ENCODE measurements at regions of chr7 and their contacts with region 1.

Region 1: DNA sequence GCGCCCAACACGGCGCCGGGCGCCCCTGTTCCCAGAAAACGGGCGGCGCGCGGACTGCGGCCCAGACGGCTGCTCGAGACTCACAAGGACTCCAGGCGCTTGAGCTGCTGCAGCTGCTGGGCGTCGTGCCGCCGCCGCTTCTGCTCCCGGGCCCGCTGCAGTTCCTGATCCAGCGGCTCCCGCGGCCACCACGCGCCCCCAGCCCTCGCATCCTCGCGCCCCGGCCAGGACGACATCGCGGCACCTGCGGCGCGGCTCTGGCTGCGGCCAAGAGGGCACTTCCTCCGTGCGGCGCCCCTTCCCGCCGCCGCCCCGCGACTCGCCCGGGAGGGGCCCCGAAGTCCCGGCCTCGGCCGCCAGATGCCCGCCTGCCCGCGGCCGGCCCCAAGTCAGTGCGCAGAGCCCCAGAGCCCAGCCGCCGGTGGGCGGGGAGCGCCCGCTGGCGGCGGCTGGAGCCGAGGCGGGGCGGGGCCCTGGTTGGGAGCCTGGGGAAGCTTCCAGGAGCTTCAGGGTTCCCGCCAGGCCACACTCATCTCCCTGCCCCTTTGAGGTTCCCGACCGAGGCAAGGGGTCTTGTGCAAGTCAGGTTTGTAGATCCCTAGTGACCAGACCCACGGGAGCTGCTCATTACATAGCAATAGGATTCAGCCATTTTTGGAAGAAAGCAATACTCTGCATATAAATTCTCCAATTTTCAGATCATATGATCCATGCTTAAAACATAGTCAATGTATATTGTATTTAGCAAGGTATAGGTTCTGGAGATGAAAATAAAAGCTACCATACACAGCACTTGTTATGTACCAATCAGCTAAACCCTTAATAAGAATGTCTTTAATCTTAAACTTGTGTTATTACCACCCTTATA is 14.2 kb upstream of the FKBP9 start:
- DNase-seq: peak; percentile 50
- ATAC-seq: peak; percentile 89
- H3K4me3 ChIP-seq: peak overlapping the region; percentile 79 to 86
- H3K27ac ChIP-seq: peak overlapping the region; percentile 96
- H3K4me1 ChIP-seq: peaks cover 8 to 18% of the 10 kb centered on the region in 2 experiments
- H3K27me3 ChIP-seq: no peaks in the 10 kb centered on the region
- CTCF ChIP-seq: peak; percentile 33 to 40 (median 40); a peak in 5 of 6 replicates
- POLR2A ChIP-seq: peak; percentile 17
- RAD21 ChIP-seq: peak; percentile 58

Region 2: DNA sequence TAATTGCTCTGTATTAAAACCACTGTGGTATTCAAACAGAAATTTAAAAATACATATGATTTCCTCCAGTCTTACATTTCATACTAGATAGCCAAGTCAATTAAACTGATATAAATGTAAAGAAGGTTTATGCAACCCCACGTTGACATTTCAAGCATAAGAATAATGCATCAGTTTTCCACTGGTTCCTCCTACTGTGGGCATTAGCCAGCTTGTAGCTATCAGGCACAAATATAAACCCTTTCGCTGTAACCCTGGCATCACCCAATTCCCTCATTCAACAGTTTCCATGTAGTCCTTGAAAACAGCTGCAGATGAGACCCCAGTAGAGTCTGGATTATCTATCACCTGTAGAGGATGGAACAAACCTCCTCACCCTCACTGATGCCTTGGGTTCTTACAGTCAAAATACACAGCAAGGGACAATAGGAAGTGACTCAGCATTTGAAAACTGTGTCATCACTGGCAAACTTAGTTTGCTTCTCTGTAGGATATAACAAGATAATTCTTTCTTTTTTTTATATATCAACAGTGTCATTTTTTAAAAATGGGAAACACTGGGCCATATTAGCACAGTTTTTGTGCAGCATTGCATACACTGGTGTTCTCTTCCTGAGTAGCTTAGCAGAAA is 985.8 kb before region 1 on chr7:
- CTCF ChIA-PET with region 1: no interaction called
- POLR2A ChIA-PET with region 1: no interaction called
- RAD21 ChIA-PET with region 1: no interaction called
- intact Hi-C with region 1: no loop called
- DNase-seq: no peak
- ATAC-seq: no peak
- H3K4me3 ChIP-seq: no peak overlapping the region
- H3K27ac ChIP-seq: no peak overlapping the region
- H3K4me1 ChIP-seq: no peaks in the 10 kb centered on the region
- H3K27me3 ChIP-seq: no peaks in the 10 kb centered on the region
- CTCF ChIP-seq: no peak
- POLR2A ChIP-seq: no peak
- RAD21 ChIP-seq: no peak

Region 3: DNA sequence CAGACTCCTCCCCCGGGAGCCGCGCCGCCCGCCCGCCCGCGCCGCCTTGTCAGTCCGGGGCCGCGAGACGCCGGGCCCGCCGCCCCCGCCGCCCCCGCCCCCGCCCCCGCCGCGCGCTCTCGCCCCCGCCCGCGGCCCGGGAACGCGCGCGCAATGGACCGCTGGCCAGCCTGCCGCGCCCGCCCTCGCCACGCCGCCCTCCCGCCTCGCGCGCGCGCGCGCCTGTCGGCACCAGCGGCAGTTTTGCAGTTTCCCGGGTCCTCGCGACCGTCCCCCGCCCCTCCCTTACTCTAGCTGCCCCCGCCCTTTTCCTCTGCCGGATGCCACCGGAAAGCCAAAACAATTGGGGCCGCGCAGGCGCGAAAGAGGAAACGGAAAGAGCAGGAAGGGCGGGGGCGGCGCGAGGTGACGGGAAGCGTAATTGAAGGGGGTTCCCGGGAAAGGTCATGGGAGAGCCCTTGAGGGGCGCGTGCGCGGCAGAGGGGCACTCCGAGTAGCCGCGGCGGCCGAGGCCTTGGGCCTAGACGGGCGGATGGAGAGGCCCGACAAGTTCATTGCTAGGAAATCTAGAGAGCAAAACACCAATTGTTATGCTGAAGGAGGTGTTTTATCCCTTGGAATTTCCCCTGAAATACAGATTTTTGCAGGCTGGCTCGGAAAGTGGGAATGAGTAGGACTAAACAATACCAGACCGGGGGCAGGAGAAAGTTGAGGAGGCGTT is 51.1 kb before region 1 on chr7:
- CTCF ChIA-PET with region 1: no interaction called
- POLR2A ChIA-PET with region 1: no interaction called
- RAD21 ChIA-PET with region 1: no interaction called
- intact Hi-C with region 1: loop called (anchors 2 kb)
- DNase-seq: peak; percentile 84
- ATAC-seq: peak; percentile 71
- H3K4me3 ChIP-seq: peak overlapping the region; percentile 69 to 88
- H3K27ac ChIP-seq: peak overlapping the region; percentile 89
- H3K4me1 ChIP-seq: peaks cover 16 to 28% of the 10 kb centered on the region in 2 experiments; a peak in 3 of 4 replicates
- H3K27me3 ChIP-seq: no peaks in the 10 kb centered on the region
- CTCF ChIP-seq: no peak
- POLR2A ChIP-seq: peak; percentile 10
- RAD21 ChIP-seq: no peak

Region 4: DNA sequence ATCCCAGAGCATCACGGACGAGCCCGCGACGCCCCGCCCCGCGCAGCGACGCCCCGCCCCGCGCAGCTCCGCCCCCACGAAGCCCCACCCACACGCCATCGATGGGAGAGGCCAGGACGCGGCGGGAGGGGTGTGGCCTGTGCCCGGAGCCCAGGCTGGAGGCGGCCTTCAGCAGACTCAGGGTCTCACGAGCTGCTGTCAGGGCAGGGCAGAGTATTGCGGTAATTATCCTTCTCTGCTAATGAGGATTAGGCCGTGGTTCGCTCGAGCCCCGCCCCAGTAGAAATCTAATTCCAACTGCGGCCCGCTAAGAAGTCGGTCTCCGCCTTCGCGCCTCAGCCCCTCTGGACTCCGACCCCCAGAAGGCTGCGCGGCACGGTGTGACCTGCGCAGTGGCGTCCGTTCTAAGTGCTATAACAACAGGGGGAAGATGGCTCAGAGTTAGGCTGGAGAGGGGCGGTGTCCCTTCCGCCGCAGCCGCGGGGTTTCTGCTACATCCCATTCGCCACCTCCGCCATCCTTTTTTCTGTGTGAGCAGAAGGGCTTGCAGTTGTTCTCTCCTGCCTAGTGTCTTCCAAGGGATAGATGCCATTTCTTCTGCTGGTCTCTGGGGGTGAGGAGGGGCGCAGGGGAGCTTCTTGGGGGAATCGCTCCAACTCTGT is 119.9 kb after region 1 on chr7:
- CTCF ChIA-PET with region 1: no interaction called
- POLR2A ChIA-PET with region 1: no interaction called
- RAD21 ChIA-PET with region 1: no interaction called
- intact Hi-C with region 1: loop called (anchors 5 kb)
- DNase-seq: peak; percentile 93
- ATAC-seq: peak; percentile 95
- H3K4me3 ChIP-seq: peak overlapping the region; percentile 75 to 86
- H3K27ac ChIP-seq: peak overlapping the region; percentile 74
- H3K4me1 ChIP-seq: peaks cover 7 to 17% of the 10 kb centered on the region in 2 experiments; a peak in 3 of 4 replicates
- H3K27me3 ChIP-seq: no peaks in the 10 kb centered on the region
- CTCF ChIP-seq: no peak
- POLR2A ChIP-seq: peak; percentile 76
- RAD21 ChIP-seq: no peak

Measured in HCT116 (cell line).